Sciatic nerve (tissue), 2 donors: ENCODE measurements at regions of chr13 and their contacts with region 1.

Region 1: DNA sequence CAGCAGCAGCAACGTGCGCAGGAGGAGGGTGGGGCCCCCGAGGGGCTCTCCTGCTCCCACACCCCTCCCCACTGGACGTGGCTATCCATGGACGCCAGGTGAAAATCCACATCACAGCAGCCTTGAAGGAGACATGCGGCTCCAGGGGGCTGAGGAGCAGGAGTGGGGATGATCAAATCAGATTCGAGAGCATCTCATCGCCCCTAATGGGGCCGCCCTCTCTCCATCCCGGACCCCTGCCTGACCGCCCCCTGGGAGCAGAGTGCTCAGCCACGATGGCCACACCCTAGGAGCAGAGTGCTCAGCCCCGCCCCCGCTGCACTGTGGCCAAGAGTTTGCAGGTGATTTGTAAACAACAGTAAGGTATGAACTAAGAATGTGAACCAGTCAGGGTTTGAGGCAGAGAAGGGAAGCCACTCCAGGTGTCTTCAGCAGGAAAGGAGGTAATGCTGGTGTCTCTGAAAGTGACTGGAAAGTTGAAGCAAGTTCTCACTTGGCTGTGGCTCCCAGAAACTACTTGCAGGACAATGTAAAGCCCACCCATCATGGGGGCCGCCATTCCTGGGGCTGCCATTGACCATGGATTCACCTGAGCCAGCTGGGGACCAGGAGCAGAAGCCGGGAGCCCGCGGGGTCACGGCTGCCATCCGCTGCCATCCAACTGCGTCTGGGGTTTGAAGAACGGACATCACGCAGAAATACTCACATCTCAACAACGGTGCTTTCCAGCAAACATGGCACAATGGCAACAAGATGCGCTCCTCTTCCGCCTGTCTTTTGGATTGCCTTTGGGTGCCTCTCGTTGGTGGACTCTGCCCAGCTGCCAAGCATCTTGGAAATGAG is 71.8 kb downstream of the SPACA7 start:
- DNase-seq: no peak
- ATAC-seq: no peak

Region 2: DNA sequence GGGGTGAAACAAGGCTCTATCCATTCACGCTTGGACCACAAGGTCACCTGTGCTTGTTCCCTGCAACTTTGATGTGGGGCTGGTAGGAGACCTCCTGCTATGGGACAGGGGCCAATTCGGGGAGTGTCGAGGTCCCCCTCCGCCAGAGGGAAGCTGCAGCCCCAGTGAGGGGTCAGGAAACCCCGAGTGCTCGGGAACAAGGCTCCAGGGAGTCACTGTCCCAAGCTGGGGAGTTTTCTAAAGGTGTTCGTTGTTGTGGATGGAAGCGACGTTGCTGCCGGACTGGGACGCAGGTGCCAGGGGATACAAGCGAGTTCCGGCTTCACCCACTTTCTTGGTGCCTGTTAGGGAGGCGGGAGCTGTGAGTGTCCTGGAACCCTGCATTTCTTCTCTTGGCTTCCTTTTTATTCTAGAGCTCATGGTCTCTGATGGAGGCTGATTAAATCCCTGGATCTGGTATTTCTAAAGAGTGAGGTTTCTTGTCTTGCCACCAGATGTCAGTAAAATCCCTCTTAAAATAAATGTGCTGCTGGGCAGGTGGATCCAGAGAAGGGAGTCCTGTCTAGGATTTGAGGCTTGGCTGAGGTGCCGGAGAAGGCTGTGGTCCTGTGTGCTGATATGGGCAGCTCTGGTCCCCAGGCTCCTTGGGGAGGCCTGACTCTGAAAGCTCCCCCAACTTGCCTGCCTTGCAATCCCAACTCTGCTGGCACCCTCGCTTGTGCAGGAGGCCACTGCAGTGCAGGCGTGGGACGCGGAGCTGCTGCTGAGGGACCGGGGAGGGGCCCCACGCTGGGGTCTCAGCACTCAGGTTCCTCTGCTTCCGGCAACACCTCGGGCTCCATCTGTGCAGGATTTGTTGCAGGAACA is 973.6 kb before region 1 on chr13:
- intact Hi-C with region 1: loop called (anchors 5 kb)
- DNase-seq: no peak
- ATAC-seq: peak; percentile 43

Region 3: GRCh38 chr13:112803422-112803821 is 355.4 kb after region 1 on chr13:
- intact Hi-C with region 1: no loop called
- DNase-seq: peak; percentile 31
- ATAC-seq: no peak